CD8-positive, alpha-beta T cell (primary cell): ENCODE measurements at regions of chr1 and their contacts with region 1.

Region 1: GRCh38 chr1:52552505-52553361 is at the start of gene TUT4:
- DNase-seq: peak; percentile 55 to 87 (median 73)
- ATAC-seq: peak; percentile 56
- H3K4me3 ChIP-seq: peak within 1 kb of the TSS; percentile 87 to 96
- H3K4me3 Mint-ChIP-seq: peak within 1 kb of the TSS; percentile 70
- H3K27ac ChIP-seq: peak within 1 kb of the TSS; percentile 92 to 96
- H3K27ac Mint-ChIP-seq: peak within 1 kb of the TSS; percentile 69
- H3K4me1 ChIP-seq: peaks cover 35% of the 10 kb centered on the region
- H3K4me1 Mint-ChIP-seq: peaks cover 40% of the 10 kb centered on the region
- H3K27me3 ChIP-seq: no peaks in the 10 kb centered on the region
- H3K27me3 Mint-ChIP-seq: no peaks in the 10 kb centered on the region
- CTCF ChIP-seq: peak; percentile 8
- total RNA-seq, gene TUT4: 133 to 134 TPM

Region 2: DNA sequence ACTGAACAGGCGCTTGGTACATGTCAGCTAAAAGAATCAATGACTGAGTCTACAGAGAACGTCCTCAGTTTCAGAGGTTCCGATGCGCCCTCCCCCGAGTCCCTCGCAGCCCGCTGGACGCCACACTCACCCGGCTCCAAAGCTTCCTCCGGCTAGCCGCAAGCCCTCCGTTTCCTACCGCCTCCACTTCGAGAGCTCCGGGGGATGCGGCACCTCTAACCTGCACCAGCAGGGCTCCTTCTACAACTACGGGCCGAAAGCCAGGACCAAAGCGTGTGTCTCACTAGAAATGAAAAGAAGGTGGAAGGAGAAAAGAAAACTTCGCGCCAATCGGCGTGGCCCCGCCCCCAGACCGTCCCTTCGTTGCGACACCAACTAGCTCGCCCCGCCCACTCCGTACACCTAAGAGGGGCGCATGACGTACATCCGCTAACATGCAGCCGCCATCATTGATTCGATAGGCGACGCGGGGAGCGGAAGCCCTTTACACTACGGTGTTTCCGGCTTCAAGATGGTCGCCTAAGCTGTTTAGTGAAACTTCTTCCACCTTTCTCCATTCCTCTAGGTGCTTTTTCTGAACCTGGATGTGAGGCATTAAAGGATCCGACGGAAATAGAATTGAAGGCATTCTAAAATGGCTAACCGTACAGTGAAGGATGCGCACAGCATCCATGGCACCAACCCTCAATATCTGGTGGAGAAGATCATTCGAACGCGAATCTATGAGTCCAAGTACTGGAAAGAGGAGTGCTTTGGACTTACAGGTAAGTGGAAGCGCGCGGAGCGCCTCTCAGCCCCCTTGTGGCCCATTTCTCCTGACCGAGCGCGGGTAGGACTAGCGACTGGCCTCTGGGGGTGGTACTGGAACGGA is 148.4 kb before region 1 on chr1 and contains the starts of genes ORC1 and PRPF38A:
- CTCF ChIA-PET with region 1: no interaction called
- POLR2A ChIA-PET with region 1: interaction called, 15 read pairs
- intact Hi-C with region 1: loop called (anchors 1 to 5 kb)
- DNase-seq: peak; percentile 94 to 99 (median 98)
- ATAC-seq: peak; percentile 92
- H3K4me3 ChIP-seq: peak within 1 kb of the TSS; percentile 87 to 92
- H3K4me3 Mint-ChIP-seq: peak within 1 kb of the TSS; percentile 99
- H3K27ac ChIP-seq: peak within 1 kb of the TSS; percentile 96
- H3K27ac Mint-ChIP-seq: peak within 1 kb of the TSS; percentile 98
- H3K4me1 ChIP-seq: peaks cover 26% of the 10 kb centered on the region
- H3K4me1 Mint-ChIP-seq: peaks cover 42% of the 10 kb centered on the region
- H3K27me3 ChIP-seq: no peaks in the 10 kb centered on the region
- H3K27me3 Mint-ChIP-seq: no peaks in the 10 kb centered on the region
- CTCF ChIP-seq: no peak
- total RNA-seq, gene ORC1: 1.2 to 1.3 TPM
- total RNA-seq, gene PRPF38A: 52.2 to 62.0 TPM

Region 3: DNA sequence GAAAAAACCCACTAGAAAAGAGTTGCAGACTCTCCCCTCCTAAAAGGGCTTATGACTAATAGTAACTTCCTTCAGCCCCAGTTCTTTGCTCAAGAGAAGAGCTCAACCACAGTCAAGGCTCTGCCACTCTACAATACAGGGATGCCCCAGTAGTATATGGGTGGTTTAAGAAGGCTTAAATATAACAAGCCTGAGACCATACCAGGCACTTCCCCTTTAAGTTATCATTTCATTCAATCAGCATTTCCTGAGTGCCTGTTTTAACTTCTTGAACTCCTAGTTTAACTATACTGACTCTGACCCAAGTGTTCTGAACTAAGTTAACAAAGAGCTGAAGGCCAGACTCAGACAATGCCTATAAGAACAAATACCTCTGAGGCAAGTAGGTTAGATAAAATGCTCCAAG is 128.5 kb before region 1 on chr1:
- CTCF ChIA-PET with region 1: interaction called, 4 read pairs
- POLR2A ChIA-PET with region 1: interaction called, 3 read pairs
- intact Hi-C with region 1: loop called (anchors 5 kb)
- DNase-seq: peak in 8 of 9 experiments; percentile 11 to 81 (median 46)
- ATAC-seq: peak; percentile 91
- H3K4me3 ChIP-seq: no peak overlapping the region
- H3K4me3 Mint-ChIP-seq: peak overlapping the region; percentile 44
- H3K27ac ChIP-seq: peak overlapping the region; percentile 60 to 72
- H3K27ac Mint-ChIP-seq: peak overlapping the region; percentile 99
- H3K4me1 ChIP-seq: peaks cover 44% of the 10 kb centered on the region
- H3K4me1 Mint-ChIP-seq: peaks cover 41% of the 10 kb centered on the region
- H3K27me3 ChIP-seq: no peaks in the 10 kb centered on the region
- H3K27me3 Mint-ChIP-seq: no peaks in the 10 kb centered on the region
- CTCF ChIP-seq: no peak

Region 4: DNA sequence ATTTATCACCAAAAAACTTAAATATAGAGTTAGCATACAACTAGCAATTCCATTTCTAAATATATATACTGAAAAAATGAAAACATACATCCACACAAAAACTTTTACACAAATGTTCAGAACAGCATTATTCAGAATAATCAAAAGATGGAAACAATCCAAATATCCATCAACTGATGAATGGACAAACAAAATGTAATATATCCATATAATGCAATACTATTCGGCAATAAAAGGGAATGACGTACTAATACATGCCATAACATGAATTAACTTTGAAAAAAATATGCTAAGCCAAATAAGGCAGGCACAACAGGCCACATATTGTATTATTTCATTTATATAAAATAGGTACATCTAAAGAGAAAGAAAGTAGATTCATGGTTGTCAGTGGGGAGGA is 33.8 kb before region 1 on chr1:
- CTCF ChIA-PET with region 1: no interaction called
- POLR2A ChIA-PET with region 1: interaction called, 4 read pairs
- intact Hi-C with region 1: loop called in 1 of 2 experiments (anchors 5 kb)
- DNase-seq: no peak
- ATAC-seq: no peak
- H3K4me3 ChIP-seq: no peak overlapping the region
- H3K4me3 Mint-ChIP-seq: no peak overlapping the region
- H3K27ac ChIP-seq: no peak overlapping the region
- H3K27ac Mint-ChIP-seq: no peak overlapping the region
- H3K4me1 ChIP-seq: peaks cover 6% of the 10 kb centered on the region
- H3K4me1 Mint-ChIP-seq: peaks cover 32% of the 10 kb centered on the region
- H3K27me3 ChIP-seq: no peaks in the 10 kb centered on the region
- H3K27me3 Mint-ChIP-seq: no peaks in the 10 kb centered on the region
- CTCF ChIP-seq: no peak

Region 5: DNA sequence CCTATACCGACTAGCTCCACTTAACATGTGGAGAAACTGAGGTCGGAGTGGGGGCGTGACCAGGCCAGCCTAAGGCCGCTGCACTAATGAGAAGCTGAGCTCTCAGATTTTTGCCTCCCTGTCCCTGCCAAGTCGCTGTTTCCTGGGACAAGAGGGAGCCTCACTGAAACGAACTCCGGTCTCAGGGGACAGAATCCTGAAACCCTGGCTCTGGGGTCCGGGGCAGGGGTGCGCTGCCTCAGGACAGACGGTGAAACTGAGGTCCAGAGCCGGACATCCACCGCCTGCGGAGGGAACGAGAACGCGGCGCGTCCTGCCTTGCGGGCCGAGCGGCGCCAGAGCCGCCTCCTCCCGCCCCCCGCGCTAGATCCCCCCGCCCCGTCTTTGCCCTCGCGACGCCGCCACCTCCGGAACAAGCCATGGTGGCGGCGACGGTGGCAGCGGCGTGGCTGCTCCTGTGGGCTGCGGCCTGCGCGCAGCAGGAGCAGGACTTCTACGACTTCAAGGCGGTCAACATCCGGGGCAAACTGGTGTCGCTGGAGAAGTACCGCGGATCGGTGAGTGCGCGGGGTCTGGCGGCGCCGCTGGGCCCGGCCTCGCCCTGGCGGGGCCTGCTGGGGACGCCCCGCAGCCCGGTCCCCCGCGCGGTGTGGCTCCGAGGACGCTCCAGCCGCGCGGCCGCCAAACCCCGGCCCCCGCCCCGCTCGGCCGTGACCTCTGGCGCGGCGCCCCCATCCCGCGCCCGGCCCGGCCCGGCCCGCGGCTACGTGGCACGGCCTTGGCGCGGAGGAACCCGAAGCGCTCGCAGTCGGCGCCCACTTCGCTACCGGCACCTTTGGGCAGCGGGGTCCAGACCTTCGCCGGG is 49.5 kb after region 1 on chr1 and contains the start of gene GPX7:
- CTCF ChIA-PET with region 1: interaction called, 3 read pairs
- POLR2A ChIA-PET with region 1: interaction called, 14 read pairs
- intact Hi-C with region 1: loop called (anchors 1 to 2 kb)
- DNase-seq: peak; percentile 21 to 81 (median 66)
- ATAC-seq: peak; percentile 82
- H3K4me3 ChIP-seq: peak within 1 kb of the TSS; percentile 59 to 64
- H3K4me3 Mint-ChIP-seq: peak within 1 kb of the TSS; percentile 91
- H3K27ac ChIP-seq: peak within 1 kb of the TSS; percentile 71 to 73
- H3K27ac Mint-ChIP-seq: peak within 1 kb of the TSS; percentile 96
- H3K4me1 ChIP-seq: peaks cover 30% of the 10 kb centered on the region
- H3K4me1 Mint-ChIP-seq: peaks cover 52% of the 10 kb centered on the region
- H3K27me3 ChIP-seq: no peaks in the 10 kb centered on the region
- H3K27me3 Mint-ChIP-seq: no peaks in the 10 kb centered on the region
- CTCF ChIP-seq: no peak
- total RNA-seq, gene GPX7: 10.7 to 11.1 TPM

Region 6: DNA sequence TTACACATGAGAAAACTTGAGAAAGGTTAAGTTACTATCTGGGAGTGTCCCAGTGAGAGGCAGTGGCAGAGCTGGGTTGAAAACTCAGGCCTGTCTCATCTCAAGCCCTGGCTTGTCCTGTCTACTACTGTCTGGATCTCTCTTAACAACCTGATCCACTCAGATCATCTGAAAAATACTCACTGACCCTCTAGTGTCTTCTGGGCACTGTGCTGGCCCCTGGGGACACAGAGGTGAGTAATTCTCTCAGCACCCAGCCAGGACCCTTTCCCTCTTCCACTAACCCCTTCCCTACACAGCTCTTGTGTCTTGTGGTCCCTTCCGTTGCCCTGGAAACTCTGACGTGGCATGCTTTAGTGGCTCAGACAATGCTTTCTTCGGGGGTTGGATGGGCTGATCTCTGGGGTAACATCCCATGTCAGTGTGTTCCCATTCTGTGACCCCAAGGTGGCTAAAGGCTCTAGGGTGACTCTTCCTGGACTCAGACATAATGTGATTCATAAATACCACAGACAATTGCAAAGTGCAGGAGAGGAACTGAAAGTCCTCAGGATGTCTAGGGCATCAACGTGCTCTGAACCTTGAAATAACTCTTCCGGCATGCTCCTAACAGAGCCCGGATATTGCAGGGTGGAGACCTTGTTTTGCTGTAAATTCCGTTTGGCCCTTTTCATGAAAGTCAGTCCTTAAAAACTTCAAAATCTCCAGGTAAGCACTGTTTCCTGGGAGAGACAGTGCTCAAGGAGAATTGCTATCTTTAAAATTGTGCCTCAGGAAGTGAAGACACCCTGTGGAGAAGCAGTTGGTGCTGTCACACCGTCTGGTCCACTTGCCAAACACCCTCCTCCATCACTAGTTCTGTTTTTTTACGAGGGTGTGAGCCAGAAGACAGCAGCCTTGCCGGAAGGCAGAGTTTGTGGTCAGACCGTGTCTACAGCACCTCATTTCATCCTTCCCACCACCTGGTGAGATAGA is 84.3 kb after region 1 on chr1:
- CTCF ChIA-PET with region 1: interaction called, 6 read pairs
- POLR2A ChIA-PET with region 1: interaction called, 23 read pairs
- intact Hi-C with region 1: loop called (anchors 1 to 5 kb)
- DNase-seq: peak; percentile 44 to 91 (median 78)
- ATAC-seq: peak; percentile 60
- H3K4me3 ChIP-seq: peak overlapping the region; percentile 27 to 31
- H3K4me3 Mint-ChIP-seq: peak overlapping the region; percentile 77
- H3K27ac ChIP-seq: peak overlapping the region; percentile 89 to 99
- H3K27ac Mint-ChIP-seq: peak overlapping the region; percentile 99
- H3K4me1 ChIP-seq: peaks cover 83% of the 10 kb centered on the region
- H3K4me1 Mint-ChIP-seq: peaks cover 80% of the 10 kb centered on the region
- H3K27me3 ChIP-seq: no peaks in the 10 kb centered on the region
- H3K27me3 Mint-ChIP-seq: no peaks in the 10 kb centered on the region
- CTCF ChIP-seq: no peak

Region 7: GRCh38 chr1:52702886-52703787 is 150.4 kb after region 1 on chr1:
- CTCF ChIA-PET with region 1: no interaction called
- POLR2A ChIA-PET with region 1: interaction called, 6 read pairs
- intact Hi-C with region 1: loop called in 1 of 2 experiments (anchors 5 kb)
- DNase-seq: peak; percentile 61 to 92 (median 78)
- ATAC-seq: peak; percentile 93
- H3K4me3 ChIP-seq: peak overlapping the region; percentile 54 to 59
- H3K4me3 Mint-ChIP-seq: peak overlapping the region; percentile 89
- H3K27ac ChIP-seq: peak overlapping the region; percentile 80 to 87
- H3K27ac Mint-ChIP-seq: peak overlapping the region; percentile 98
- H3K4me1 ChIP-seq: peaks cover 11% of the 10 kb centered on the region
- H3K4me1 Mint-ChIP-seq: peaks cover 19% of the 10 kb centered on the region
- H3K27me3 ChIP-seq: no peaks in the 10 kb centered on the region
- H3K27me3 Mint-ChIP-seq: peaks cover under 1% of the 10 kb centered on the region
- CTCF ChIP-seq: no peak